ENCODE measurements at regions of chr13 and their contacts with region 1.

Region 1: DNA sequence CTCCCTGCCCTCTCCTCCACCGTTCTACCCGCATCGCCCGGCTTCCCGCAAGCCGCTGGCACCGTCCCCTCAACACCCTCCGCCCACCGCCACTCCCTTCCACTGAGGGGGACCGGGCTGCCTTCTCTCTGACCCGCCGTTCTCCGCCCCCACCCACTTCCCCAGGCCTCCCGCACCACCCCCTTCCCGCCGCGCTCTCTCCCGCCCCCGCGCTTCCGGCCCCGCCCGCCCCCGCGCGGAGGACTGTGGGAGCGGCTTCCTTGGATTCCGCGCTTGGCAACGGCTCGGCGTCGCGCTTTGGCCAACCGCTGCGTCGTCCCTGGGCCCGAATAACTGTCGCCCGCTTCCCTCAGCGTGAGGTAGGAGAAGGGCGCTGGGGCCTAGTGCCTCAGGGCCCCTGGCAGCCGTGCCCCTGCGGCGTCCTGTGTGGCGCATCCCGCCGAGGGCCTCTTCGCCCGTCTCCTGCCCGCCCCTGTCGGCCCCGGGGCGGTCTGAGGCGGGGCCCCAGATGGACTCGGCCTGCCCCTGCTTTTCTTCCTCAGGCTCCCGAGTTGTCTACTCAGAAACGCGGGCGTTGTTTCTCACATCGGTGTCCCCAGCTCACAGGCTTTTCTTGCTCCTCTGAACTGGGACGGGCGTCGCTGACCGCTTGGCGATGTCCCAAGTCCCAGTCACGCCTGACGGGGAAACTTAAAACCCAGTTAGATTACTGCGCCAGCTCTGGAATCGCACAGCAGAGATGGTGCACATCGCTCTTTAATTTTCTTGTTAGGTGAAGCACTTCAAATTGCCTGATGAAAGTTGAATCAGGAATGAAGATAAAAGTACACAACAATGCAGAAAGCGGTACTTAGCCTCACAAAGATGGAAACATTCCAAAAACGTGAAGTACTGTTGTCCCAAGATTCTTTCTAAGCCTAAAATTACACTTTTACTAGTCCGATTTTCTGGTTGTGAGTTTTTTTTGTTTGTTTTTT is at the start of gene IFT88:
- DNase-seq: peak; percentile 72 to 87 (median 80)
- ATAC-seq: peak; percentile 94
- H3K4me3 ChIP-seq: peak within 1 kb of the TSS; percentile 52
- H3K4me3 Mint-ChIP-seq: peak within 1 kb of the TSS; percentile 88 to 97 (median 93)
- H3K27ac ChIP-seq: peak within 1 kb of the TSS; percentile 73
- H3K27ac Mint-ChIP-seq: peak within 1 kb of the TSS; percentile 92 to 94 (median 93)
- H3K4me1 ChIP-seq: peaks cover 0 to 8% of the 10 kb centered on the region in 2 donors
- H3K4me1 Mint-ChIP-seq: peaks cover 7 to 18% (median 17%) of the 10 kb centered on the region in 7 donors
- H3K27me3 ChIP-seq: no peaks in the 10 kb centered on the region
- H3K27me3 Mint-ChIP-seq: no peaks in the 10 kb centered on the region
- total RNA-seq, gene IFT88: 5.0 to 17.0 (median 11.7) TPM

Region 2: DNA sequence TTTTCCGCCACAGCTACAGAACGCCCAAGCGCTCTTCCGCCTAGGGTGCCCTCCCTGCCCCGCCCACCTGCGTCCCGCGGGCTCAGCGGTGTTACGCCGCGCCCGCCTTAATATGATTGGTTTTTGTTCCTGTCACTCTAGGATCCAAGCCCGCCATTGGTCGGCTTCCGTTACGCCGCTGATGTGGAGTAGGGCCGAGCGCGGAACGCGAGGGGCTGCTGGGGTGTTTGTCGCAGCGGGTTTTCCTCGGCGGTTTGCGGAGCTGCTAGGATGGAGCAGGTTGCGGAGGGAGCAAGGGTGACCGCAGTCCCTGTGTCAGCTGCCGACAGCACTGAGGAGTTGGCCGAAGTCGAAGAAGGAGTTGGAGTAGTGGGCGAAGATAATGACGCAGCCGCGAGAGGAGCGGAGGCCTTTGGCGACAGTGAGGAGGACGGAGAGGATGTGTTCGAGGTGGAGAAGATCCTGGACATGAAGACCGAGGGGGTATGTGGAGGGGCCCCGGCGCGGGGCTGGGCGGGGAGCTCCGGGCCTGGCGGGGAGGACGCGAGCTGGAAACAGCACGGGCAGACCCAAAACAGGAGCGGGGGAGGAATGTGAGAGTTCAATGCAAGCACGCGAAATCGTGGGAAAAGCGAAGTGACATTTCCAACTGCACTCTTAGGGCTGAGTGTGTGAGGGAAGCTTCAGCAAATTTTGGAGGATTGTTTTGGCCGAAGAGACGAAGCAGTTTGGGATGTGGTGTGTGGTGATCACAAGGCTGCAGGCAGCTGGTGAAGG is 933.5 kb before region 1 on chr13 and contains the start of gene MPHOSPH8:
- CTCF ChIA-PET with region 1: no interaction called
- POLR2A ChIA-PET with region 1: no interaction called
- intact Hi-C with region 1: loop called in 1 of 2 experiments (anchors 10 kb)
- DNase-seq: peak; percentile 82 to 94 (median 92)
- ATAC-seq: peak; percentile 99
- H3K4me3 ChIP-seq: peak within 1 kb of the TSS; percentile 83
- H3K4me3 Mint-ChIP-seq: peak within 1 kb of the TSS; percentile 96 to 100 (median 100)
- H3K27ac ChIP-seq: peak within 1 kb of the TSS; percentile 91
- H3K27ac Mint-ChIP-seq: peak within 1 kb of the TSS; percentile 98 to 100 (median 99)
- H3K4me1 ChIP-seq: peaks cover 20 to 28% of the 10 kb centered on the region in 2 donors
- H3K4me1 Mint-ChIP-seq: peaks cover 29 to 42% (median 34%) of the 10 kb centered on the region in 7 donors
- H3K27me3 ChIP-seq: no peaks in the 10 kb centered on the region
- H3K27me3 Mint-ChIP-seq: peaks cover 0 to 3% (median 0%) of the 10 kb centered on the region in 5 donors
- total RNA-seq, gene MPHOSPH8: 50.6 to 131 (median 65.6) TPM

Region 3: GRCh38 chr13:19863323-19864023 is 703.7 kb before region 1 on chr13 and contains the start of gene ZMYM5:
- CTCF ChIA-PET with region 1: no interaction called
- POLR2A ChIA-PET with region 1: no interaction called
- intact Hi-C with region 1: loop called (anchors 5 to 10 kb)
- DNase-seq: peak; percentile 87 to 96 (median 90)
- ATAC-seq: peak; percentile 89
- H3K4me3 ChIP-seq: peak within 1 kb of the TSS; percentile 80
- H3K4me3 Mint-ChIP-seq: peak within 1 kb of the TSS; percentile 85 to 98 (median 97)
- H3K27ac ChIP-seq: peak within 1 kb of the TSS; percentile 84
- H3K27ac Mint-ChIP-seq: peak within 1 kb of the TSS; percentile 90 to 98 (median 97)
- H3K4me1 ChIP-seq: peaks cover 22 to 23% of the 10 kb centered on the region in 2 donors
- H3K4me1 Mint-ChIP-seq: peaks cover 12 to 43% (median 37%) of the 10 kb centered on the region in 7 donors
- H3K27me3 ChIP-seq: no peaks in the 10 kb centered on the region
- H3K27me3 Mint-ChIP-seq: no peaks in the 10 kb centered on the region
- total RNA-seq, gene ZMYM5: 17.5 to 25.6 (median 24.7) TPM

Region 4: GRCh38 chr13:20197361-20197834 is 369.8 kb before region 1 on chr13:
- CTCF ChIA-PET with region 1: interaction called, 3 read pairs
- POLR2A ChIA-PET with region 1: no interaction called
- intact Hi-C with region 1: loop called (anchors 5 to 10 kb)
- DNase-seq: peak in 5 of 9 donors; percentile 38 to 59 (median 51)
- ATAC-seq: peak; percentile 81
- H3K4me3 ChIP-seq: no peak overlapping the region
- H3K4me3 Mint-ChIP-seq: no peak overlapping the region
- H3K27ac ChIP-seq: no peak overlapping the region
- H3K27ac Mint-ChIP-seq: peak overlapping the region in 1 of 9 donors; percentile 57
- H3K4me1 ChIP-seq: peaks cover 11 to 20% of the 10 kb centered on the region in 2 donors
- H3K4me1 Mint-ChIP-seq: peaks cover 15 to 26% (median 19%) of the 10 kb centered on the region in 7 donors
- H3K27me3 ChIP-seq: peaks cover 27 to 41% of the 10 kb centered on the region in 2 donors
- H3K27me3 Mint-ChIP-seq: peaks cover 30 to 64% (median 48%) of the 10 kb centered on the region in 5 donors

Region 5: GRCh38 chr13:20525690-20526544 is 41.3 kb before region 1 on chr13 and contains the start of gene CRYL1:
- CTCF ChIA-PET with region 1: no interaction called
- POLR2A ChIA-PET with region 1: interaction called, 14 read pairs
- intact Hi-C with region 1: loop called (anchors 1 kb)
- DNase-seq: peak; percentile 56 to 78 (median 68)
- ATAC-seq: peak; percentile 92
- H3K4me3 ChIP-seq: peak within 1 kb of the TSS; percentile 68
- H3K4me3 Mint-ChIP-seq: peak within 1 kb of the TSS; percentile 76 to 94 (median 87)
- H3K27ac ChIP-seq: peak within 1 kb of the TSS; percentile 65
- H3K27ac Mint-ChIP-seq: peak within 1 kb of the TSS; percentile 66 to 96 (median 88)
- H3K4me1 ChIP-seq: peaks cover 0 to 7% of the 10 kb centered on the region in 2 donors
- H3K4me1 Mint-ChIP-seq: peaks cover 11 to 40% (median 25%) of the 10 kb centered on the region in 7 donors
- H3K27me3 ChIP-seq: no peaks in the 10 kb centered on the region
- H3K27me3 Mint-ChIP-seq: peaks cover 0 to 9% (median 0%) of the 10 kb centered on the region in 5 donors
- total RNA-seq, gene CRYL1: 12.3 to 21.2 (median 16.3) TPM

Region 6: DNA sequence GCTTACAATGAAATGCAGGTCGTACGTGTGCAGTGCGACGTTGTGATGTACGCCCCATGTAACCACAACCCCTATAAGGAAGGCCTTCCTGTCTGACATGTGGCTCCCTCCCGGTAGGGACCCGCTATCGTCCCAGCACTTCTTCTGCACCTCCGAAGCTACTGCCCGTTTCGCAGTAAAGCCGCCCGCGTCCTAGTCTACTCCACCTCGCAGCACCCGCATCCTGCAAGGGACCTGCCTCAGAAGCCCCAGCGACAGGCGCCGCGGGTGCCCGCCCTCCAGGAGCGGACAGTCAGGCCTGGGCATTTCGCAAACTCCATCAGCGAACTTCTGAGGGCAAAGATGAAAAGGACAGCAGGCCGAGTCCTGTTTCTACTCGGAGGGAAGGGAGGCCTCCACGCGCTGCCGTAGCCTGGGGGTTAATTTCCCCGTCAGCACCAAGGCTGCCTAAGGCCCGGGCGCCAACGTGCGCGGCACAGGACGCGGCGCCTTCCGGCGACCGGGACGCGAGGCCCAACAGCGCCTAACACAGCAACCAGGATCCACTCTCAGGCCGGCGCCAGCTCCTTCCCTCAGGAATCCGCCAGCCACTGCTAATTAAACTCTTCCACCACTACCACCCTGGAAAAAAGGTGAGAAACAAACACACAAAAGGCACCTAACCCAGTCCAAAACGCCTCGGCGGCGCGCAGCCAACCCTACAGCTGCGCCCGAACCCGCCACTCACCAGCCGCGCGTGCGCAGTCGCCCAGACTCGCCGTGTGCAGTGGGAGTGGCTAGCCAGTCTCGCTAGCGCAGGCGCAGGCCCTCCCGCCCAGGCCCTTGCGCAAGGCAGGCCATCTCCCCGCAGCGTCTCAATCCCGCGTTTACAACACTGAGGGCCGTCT is 206.3 kb after region 1 on chr13 and contains the start of gene EEF1AKMT1:
- CTCF ChIA-PET with region 1: no interaction called
- POLR2A ChIA-PET with region 1: interaction called, 6 read pairs
- intact Hi-C with region 1: loop called (anchors 1 kb)
- DNase-seq: peak; percentile 88 to 98 (median 94)
- ATAC-seq: peak; percentile 93
- H3K4me3 ChIP-seq: peak within 1 kb of the TSS; percentile 90
- H3K4me3 Mint-ChIP-seq: peak within 1 kb of the TSS; percentile 85 to 99 (median 94)
- H3K27ac ChIP-seq: peak within 1 kb of the TSS; percentile 93
- H3K27ac Mint-ChIP-seq: peak within 1 kb of the TSS; percentile 94 to 100 (median 99)
- H3K4me1 ChIP-seq: peaks cover 9 to 16% of the 10 kb centered on the region in 2 donors
- H3K4me1 Mint-ChIP-seq: peaks cover 19 to 60% (median 53%) of the 10 kb centered on the region in 7 donors
- H3K27me3 ChIP-seq: no peaks in the 10 kb centered on the region
- H3K27me3 Mint-ChIP-seq: no peaks in the 10 kb centered on the region
- total RNA-seq, gene EEF1AKMT1: 4.2 to 11.2 (median 8.5) TPM

Region 7: DNA sequence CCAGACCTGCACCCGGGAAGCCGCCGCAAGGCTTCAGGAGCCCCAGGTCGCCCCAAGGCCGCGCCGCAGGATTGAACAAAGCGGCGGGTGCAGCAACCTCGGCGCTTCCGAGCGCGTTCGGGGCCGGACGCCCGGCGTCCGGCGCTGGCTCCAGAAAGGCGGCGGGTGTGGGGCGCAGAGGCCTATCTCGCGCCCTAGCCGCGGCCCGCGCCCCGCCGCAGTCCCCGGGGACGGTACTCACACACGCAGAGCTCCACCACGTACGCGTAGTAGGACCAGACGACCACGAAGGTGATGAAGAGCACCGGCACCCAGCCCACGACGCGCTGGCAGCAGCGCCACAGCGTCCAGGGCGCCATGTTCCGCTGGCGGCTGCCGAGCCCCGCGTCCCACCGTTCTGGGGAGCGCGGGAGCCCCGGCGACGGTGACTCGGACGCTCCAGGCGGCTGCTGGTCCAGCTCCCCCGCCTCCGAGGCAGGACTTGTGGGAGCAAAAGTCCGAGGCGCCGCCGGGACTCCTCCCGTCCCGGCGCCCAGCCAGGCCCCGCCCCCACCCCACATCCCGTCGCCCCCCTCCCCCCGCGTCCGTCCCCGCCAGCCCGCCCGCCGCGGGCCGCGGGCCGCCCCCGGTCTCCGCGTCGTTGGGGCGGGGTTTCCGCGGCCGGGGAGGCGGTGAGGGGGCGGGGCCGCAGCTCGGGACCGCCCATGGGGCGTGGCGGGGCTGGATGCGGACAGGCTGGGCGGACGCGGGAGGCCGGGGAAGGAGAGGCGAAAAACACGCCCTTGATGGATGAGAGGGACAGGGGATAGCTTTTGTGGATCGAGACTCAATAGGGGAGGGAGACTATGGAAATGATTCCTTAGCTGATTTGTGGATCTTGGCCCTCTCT is 891.9 kb after region 1 on chr13 and contains the start of gene ZDHHC20:
- CTCF ChIA-PET with region 1: no interaction called
- POLR2A ChIA-PET with region 1: no interaction called
- intact Hi-C with region 1: loop called in 1 of 2 experiments (anchors 2 kb)
- DNase-seq: peak; percentile 75 to 99 (median 88)
- ATAC-seq: peak; percentile 98
- H3K4me3 ChIP-seq: peak within 1 kb of the TSS; percentile 90
- H3K4me3 Mint-ChIP-seq: peak within 1 kb of the TSS; percentile 91 to 97 (median 94)
- H3K27ac ChIP-seq: peak within 1 kb of the TSS; percentile 97
- H3K27ac Mint-ChIP-seq: peak within 1 kb of the TSS; percentile 74 to 98 (median 94)
- H3K4me1 ChIP-seq: peaks cover 9 to 19% of the 10 kb centered on the region in 2 donors
- H3K4me1 Mint-ChIP-seq: peaks cover 27 to 55% (median 42%) of the 10 kb centered on the region in 7 donors
- H3K27me3 ChIP-seq: no peaks in the 10 kb centered on the region
- H3K27me3 Mint-ChIP-seq: peaks cover 0 to 7% (median 0%) of the 10 kb centered on the region in 5 donors
- total RNA-seq, gene ZDHHC20: 60.8 to 89.9 (median 71.7) TPM

Measured in naive thymus-derived CD4-positive, alpha-beta T cell (primary cell).